Heart left ventricle (tissue), 16 donors: ENCODE measurements at regions of chr22 and their contacts with region 1.

Region 1: GRCh38 chr22:34850010-34850409 is 215.9 kb upstream of the ISX start:
- DNase-seq: no peak
- ATAC-seq: no peak
- H3K4me3 ChIP-seq: no peak overlapping the region
- H3K27ac ChIP-seq: no peak overlapping the region
- H3K4me1 ChIP-seq: no peaks in the 10 kb centered on the region
- H3K27me3 ChIP-seq: no peaks in the 10 kb centered on the region
- CTCF ChIP-seq: no peak
- POLR2A ChIP-seq: no peak

Region 2: DNA sequence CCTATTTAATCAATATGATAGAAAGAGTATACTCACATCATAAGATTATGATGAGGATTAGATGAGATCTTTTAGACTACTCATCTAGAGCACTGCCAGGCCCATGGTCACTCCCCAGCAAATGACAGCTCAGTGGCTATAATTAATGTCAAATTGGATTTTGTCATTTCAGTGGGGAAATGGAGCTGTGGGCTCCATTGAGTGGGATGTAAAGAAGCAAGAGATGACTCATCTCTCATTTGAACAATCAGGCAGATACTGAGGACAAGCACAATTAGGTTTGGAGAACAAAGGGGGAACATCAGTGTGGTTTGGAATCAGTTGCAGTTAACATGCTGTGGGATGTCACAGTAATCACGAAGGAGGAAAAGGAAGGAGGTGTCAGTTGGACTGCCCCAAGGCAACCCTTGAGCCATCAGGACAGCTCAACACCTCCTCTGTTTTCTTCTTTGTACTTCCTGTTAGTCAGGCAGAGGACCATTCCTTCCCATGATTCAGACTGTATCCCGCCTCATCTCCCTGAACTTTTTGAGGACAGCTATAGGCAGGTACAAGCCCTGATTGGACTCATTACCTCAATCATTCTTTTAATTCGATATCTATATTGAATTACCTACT is 257.8 kb before region 1 on chr22:
- intact Hi-C with region 1: no loop called
- DNase-seq: no peak
- ATAC-seq: no peak
- H3K4me3 ChIP-seq: no peak overlapping the region
- H3K27ac ChIP-seq: no peak overlapping the region
- H3K4me1 ChIP-seq: peaks cover 0 to 2% (median 0%) of the 10 kb centered on the region in 12 donors
- H3K27me3 ChIP-seq: peaks cover 0 to 4% (median 0%) of the 10 kb centered on the region in 9 donors
- CTCF ChIP-seq: no peak
- POLR2A ChIP-seq: no peak

Region 3: GRCh38 chr22:34776817-34777216 is 73.2 kb before region 1 on chr22:
- intact Hi-C with region 1: loop called in 1 of 10 experiments (anchors 10 kb)
- DNase-seq: no peak
- ATAC-seq: no peak
- H3K4me3 ChIP-seq: no peak overlapping the region
- H3K27ac ChIP-seq: no peak overlapping the region
- H3K4me1 ChIP-seq: no peaks in the 10 kb centered on the region
- H3K27me3 ChIP-seq: peaks cover 0 to 15% (median 0%) of the 10 kb centered on the region in 9 donors
- CTCF ChIP-seq: no peak
- POLR2A ChIP-seq: no peak

Region 4: DNA sequence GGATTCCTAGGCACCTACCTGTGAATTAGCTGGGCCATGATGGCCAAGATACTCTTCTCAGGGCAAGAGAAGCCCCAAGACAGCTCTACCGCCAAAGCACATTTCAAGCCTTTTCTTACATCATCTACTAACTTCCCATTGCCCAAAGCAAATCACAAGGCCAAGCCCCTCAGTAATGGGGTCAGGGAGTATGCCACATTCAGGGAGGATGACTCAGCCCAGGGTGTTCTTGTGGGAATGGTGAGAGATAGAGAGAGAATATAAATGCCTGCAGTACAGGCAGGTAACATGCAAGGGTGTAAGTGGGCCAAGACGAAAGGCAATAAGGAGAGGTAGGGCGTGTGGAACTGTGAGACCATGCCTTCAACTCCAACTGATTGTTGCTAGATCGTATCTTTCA is 53.4 kb after region 1 on chr22:
- intact Hi-C with region 1: no loop called
- DNase-seq: no peak
- ATAC-seq: no peak
- H3K4me3 ChIP-seq: no peak overlapping the region
- H3K27ac ChIP-seq: no peak overlapping the region
- H3K4me1 ChIP-seq: no peaks in the 10 kb centered on the region
- H3K27me3 ChIP-seq: no peaks in the 10 kb centered on the region
- CTCF ChIP-seq: no peak
- POLR2A ChIP-seq: no peak